ENCODE measurements at regions of chr10 and their contacts with region 1.

Region 1: GRCh38 chr10:22420787-22421517 is 75.7 kb downstream of the SPAG6 start:
- DNase-seq: peak in 1 of 2 donors; percentile 57
- ATAC-seq: peak in 1 of 3 donors; percentile 26
- H3K4me3 ChIP-seq: no peak overlapping the region
- H3K4me3 Mint-ChIP-seq: no peak overlapping the region
- H3K27ac ChIP-seq: no peak overlapping the region
- H3K27ac Mint-ChIP-seq: no peak overlapping the region
- H3K4me1 ChIP-seq: no peaks in the 10 kb centered on the region
- H3K4me1 Mint-ChIP-seq: peaks cover 0 to 8% of the 10 kb centered on the region in 2 donors
- H3K27me3 ChIP-seq: no peaks in the 10 kb centered on the region
- H3K27me3 Mint-ChIP-seq: no peaks in the 10 kb centered on the region
- CTCF ChIP-seq: peak; percentile 36

Region 2: DNA sequence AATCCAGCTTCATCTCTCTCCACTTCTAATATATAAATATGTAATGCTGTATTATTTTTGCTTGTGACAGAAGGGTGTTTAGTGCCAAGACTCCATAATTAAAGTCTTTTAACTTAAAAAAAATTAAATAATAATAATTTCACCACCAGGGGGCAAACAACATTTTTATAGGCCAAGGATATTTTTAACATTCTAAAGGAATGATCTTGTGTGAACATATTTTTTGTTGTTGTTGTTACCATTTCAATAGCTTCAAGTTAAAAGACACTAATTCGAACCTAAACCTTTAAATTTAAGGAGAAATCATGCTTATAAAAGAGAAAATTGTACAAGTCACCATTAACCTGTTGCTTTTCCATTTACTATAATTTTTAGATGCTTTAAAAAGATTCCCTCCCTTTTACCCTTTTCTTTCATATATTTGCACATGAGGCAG is 410.0 kb before region 1 on chr10:
- intact Hi-C with region 1: loop called (anchors 1 kb)
- DNase-seq: peak in 1 of 2 donors; percentile 54
- ATAC-seq: no peak
- H3K4me3 ChIP-seq: no peak overlapping the region
- H3K4me3 Mint-ChIP-seq: no peak overlapping the region
- H3K27ac ChIP-seq: no peak overlapping the region
- H3K27ac Mint-ChIP-seq: no peak overlapping the region
- H3K4me1 ChIP-seq: no peaks in the 10 kb centered on the region
- H3K4me1 Mint-ChIP-seq: no peaks in the 10 kb centered on the region
- H3K27me3 ChIP-seq: no peaks in the 10 kb centered on the region
- H3K27me3 Mint-ChIP-seq: peaks cover 6 to 23% of the 10 kb centered on the region in 2 donors
- CTCF ChIP-seq: peak; percentile 80